CD4-positive, alpha-beta T cell (primary cell): ENCODE measurements at regions of chr7 and their contacts with region 1.

Region 1: DNA sequence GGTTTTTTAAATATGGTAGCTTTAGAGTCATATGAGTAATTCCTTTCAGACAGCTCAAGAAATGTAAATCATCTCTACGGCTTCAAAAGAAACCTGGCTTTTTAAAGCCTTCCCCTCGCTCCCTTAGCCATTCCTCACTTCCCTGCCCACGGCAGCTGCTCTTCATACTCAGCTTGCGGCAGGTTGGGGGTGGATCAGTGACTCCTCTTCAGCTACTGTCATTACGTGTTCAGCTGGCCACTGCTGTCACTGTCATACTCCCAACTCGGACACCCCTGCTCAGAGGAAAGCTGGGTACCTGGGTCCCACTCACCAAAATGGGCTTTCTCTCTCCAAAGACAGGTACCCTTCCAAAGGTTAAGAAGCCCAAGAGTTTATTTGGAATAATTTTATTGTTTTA is 6.6 kb downstream of the YWHAG start:
- DNase-seq: no peak
- ATAC-seq: no peak
- H3K4me3 ChIP-seq: no peak overlapping the region
- H3K4me3 Mint-ChIP-seq: no peak overlapping the region
- H3K27ac ChIP-seq: no peak overlapping the region
- H3K27ac Mint-ChIP-seq: no peak overlapping the region
- H3K4me1 ChIP-seq: peaks cover 49% of the 10 kb centered on the region
- H3K4me1 Mint-ChIP-seq: peaks cover 72% of the 10 kb centered on the region
- H3K27me3 ChIP-seq: no peaks in the 10 kb centered on the region
- H3K27me3 Mint-ChIP-seq: no peaks in the 10 kb centered on the region
- CTCF ChIP-seq: no peak

Region 2: GRCh38 chr7:76333511-76334101 is 18.6 kb before region 1 on chr7:
- CTCF ChIA-PET with region 1: no interaction called
- POLR2A ChIA-PET with region 1: no interaction called
- intact Hi-C with region 1: loop called in 1 of 2 experiments (anchors 2 kb)
- DNase-seq: no peak
- ATAC-seq: no peak
- H3K4me3 ChIP-seq: no peak overlapping the region
- H3K4me3 Mint-ChIP-seq: no peak overlapping the region
- H3K27ac ChIP-seq: no peak overlapping the region
- H3K27ac Mint-ChIP-seq: no peak overlapping the region
- H3K4me1 ChIP-seq: peaks cover 15% of the 10 kb centered on the region
- H3K4me1 Mint-ChIP-seq: peaks cover 58% of the 10 kb centered on the region
- H3K27me3 ChIP-seq: no peaks in the 10 kb centered on the region
- H3K27me3 Mint-ChIP-seq: no peaks in the 10 kb centered on the region
- CTCF ChIP-seq: no peak